ENCODE measurements at regions of chr4 and their contacts with region 1.

Region 1: GRCh38 chr4:136687118-136687517 is 845.2 kb downstream of the PCDH18 start:
- DNase-seq: peak in 1 of 3 donors; percentile 4
- H3K4me3 ChIP-seq: no peak overlapping the region
- H3K27ac ChIP-seq: no peak overlapping the region
- H3K4me1 ChIP-seq: no peaks in the 10 kb centered on the region
- H3K27me3 ChIP-seq: no peaks in the 10 kb centered on the region

Region 2: DNA sequence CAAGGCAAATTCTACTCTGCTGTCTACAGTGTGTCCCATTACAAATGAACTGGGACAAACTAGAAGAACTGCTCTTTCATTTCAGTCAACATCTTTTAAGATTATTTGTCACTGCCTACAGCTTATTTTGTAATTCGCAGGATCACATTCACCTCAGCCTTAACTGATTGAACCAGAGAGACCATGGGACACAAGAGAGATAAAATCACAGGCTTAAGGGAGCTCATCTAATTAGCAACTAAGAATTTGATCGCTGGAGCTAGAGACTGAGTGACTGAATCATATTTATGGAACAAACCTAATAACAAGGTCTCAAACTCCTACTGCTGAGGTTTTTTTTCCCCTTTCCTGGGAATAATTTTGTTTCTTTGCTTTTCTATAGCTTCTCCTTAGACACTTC is 53.0 kb before region 1 on chr4:
- CTCF ChIA-PET with region 1: no interaction called
- POLR2A ChIA-PET with region 1: no interaction called
- DNase-seq: no peak
- H3K4me3 ChIP-seq: no peak overlapping the region
- H3K27ac ChIP-seq: no peak overlapping the region
- H3K4me1 ChIP-seq: no peaks in the 10 kb centered on the region
- H3K27me3 ChIP-seq: no peaks in the 10 kb centered on the region

Region 3: GRCh38 chr4:136864580-136865185 is 177.6 kb after region 1 on chr4:
- CTCF ChIA-PET with region 1: interaction called, 11 read pairs
- POLR2A ChIA-PET with region 1: no interaction called
- DNase-seq: peak; percentile 59 to 83 (median 78)
- H3K4me3 ChIP-seq: no peak overlapping the region
- H3K27ac ChIP-seq: no peak overlapping the region
- H3K4me1 ChIP-seq: peaks cover 0 to 6% (median 3%) of the 10 kb centered on the region in 4 experiments
- H3K27me3 ChIP-seq: no peaks in the 10 kb centered on the region

Measured in common myeloid progenitor, CD34-positive (primary cell).